Panc1 (cell line): ENCODE measurements at regions of chr10 and their contacts with region 1.

Region 1: GRCh38 chr10:55287346-55287745 is 486.3 kb upstream of the PCDH15 start:
- DNase-seq: no peak
- ATAC-seq: peak; percentile 78
- H3K4me3 ChIP-seq: no peak overlapping the region
- H3K27ac ChIP-seq: no peak overlapping the region
- H3K4me1 ChIP-seq: no peaks in the 10 kb centered on the region
- H3K27me3 ChIP-seq: no peaks in the 10 kb centered on the region
- CTCF ChIP-seq: peak; percentile 21; the same call in 1 of the 2 replicates

Region 2: GRCh38 chr10:55311848-55312635 is 24.7 kb after region 1 on chr10:
- CTCF ChIA-PET with region 1: no interaction called
- POLR2A ChIA-PET with region 1: interaction called, 6 read pairs
- in situ Hi-C with region 1: no loop called
- intact Hi-C with region 1: loop called (anchors 1 kb)
- DNase-seq: no peak
- ATAC-seq: peak; percentile 87; the same call in 1 of the 2 replicates
- H3K4me3 ChIP-seq: no peak overlapping the region
- H3K27ac ChIP-seq: no peak overlapping the region; the same call in 1 of the 2 replicates
- H3K4me1 ChIP-seq: no peaks in the 10 kb centered on the region
- H3K27me3 ChIP-seq: no peaks in the 10 kb centered on the region
- CTCF ChIP-seq: no peak